CD8-positive, alpha-beta T cell (primary cell): ENCODE measurements at regions of chr20 and their contacts with region 1.

Region 1: GRCh38 chr20:22346716-22347115 is 237.7 kb downstream of the FOXA2 start:
- DNase-seq: no peak
- ATAC-seq: no peak
- H3K4me3 ChIP-seq: no peak overlapping the region
- H3K4me3 Mint-ChIP-seq: no peak overlapping the region
- H3K27ac ChIP-seq: no peak overlapping the region
- H3K27ac Mint-ChIP-seq: no peak overlapping the region
- H3K4me1 ChIP-seq: no peaks in the 10 kb centered on the region
- H3K4me1 Mint-ChIP-seq: no peaks in the 10 kb centered on the region
- H3K27me3 ChIP-seq: no peaks in the 10 kb centered on the region
- H3K27me3 Mint-ChIP-seq: no peaks in the 10 kb centered on the region
- CTCF ChIP-seq: no peak

Region 2: GRCh38 chr20:22285555-22285954 is 61.2 kb before region 1 on chr20:
- CTCF ChIA-PET with region 1: no interaction called
- POLR2A ChIA-PET with region 1: no interaction called
- intact Hi-C with region 1: no loop called
- DNase-seq: no peak
- ATAC-seq: no peak
- H3K4me3 ChIP-seq: no peak overlapping the region
- H3K4me3 Mint-ChIP-seq: no peak overlapping the region
- H3K27ac ChIP-seq: no peak overlapping the region
- H3K27ac Mint-ChIP-seq: no peak overlapping the region
- H3K4me1 ChIP-seq: no peaks in the 10 kb centered on the region
- H3K4me1 Mint-ChIP-seq: no peaks in the 10 kb centered on the region
- H3K27me3 ChIP-seq: no peaks in the 10 kb centered on the region
- H3K27me3 Mint-ChIP-seq: no peaks in the 10 kb centered on the region
- CTCF ChIP-seq: no peak

Region 3: DNA sequence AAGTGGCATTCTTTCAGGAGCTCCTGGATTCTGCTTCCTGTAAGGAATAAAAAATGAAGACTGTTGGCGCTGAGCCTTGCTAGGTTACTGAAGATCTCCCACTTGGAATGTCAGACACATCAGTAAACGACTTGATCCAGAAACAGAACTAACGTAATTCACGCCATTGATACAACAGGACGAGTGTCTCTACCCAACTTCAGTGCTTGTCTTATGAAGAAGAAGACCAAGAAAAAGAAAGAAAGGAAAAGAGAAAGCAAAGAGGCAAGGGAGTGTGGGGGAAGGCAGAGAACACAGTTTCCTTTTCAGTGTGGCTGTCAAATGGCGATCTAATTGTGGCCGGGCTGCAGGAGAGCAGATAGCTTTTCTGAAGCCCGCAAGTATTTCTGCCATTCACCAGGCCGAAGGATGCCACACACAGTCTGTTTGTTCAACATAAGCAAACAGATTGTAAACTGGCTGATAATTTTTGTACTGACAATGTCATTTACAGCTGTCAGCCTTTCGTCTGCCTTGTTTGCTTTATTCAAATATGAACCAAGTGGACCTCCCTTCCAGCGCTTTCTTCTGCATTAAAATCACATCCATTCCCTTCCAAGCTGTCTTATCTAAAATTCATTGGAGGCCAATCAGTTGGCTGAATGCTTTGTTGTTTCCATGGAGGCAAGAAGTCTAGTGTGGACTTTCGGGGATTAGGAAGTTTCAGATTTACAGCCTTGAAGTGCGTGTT is 57.1 kb after region 1 on chr20:
- CTCF ChIA-PET with region 1: interaction called, 3 read pairs
- POLR2A ChIA-PET with region 1: no interaction called
- intact Hi-C with region 1: loop called in 1 of 2 experiments (anchors 10 kb)
- DNase-seq: peak in 1 of 9 experiments; percentile 4
- ATAC-seq: no peak
- H3K4me3 ChIP-seq: peak overlapping the region; percentile 4 to 5
- H3K4me3 Mint-ChIP-seq: peak overlapping the region; percentile 63
- H3K27ac ChIP-seq: no peak overlapping the region
- H3K27ac Mint-ChIP-seq: no peak overlapping the region
- H3K4me1 ChIP-seq: no peaks in the 10 kb centered on the region
- H3K4me1 Mint-ChIP-seq: peaks cover 10% of the 10 kb centered on the region
- H3K27me3 ChIP-seq: no peaks in the 10 kb centered on the region
- H3K27me3 Mint-ChIP-seq: peaks cover 9% of the 10 kb centered on the region
- CTCF ChIP-seq: no peak